AG04450 (cell line): ENCODE measurements at regions of chr9 and their contacts with region 1.

Region 1: GRCh38 chr9:91071185-91071990 is 269.8 kb downstream of the SYK start:
- DNase-seq: peak; percentile 92
- H3K4me3 ChIP-seq: no peak overlapping the region
- H3K27ac ChIP-seq: peak overlapping the region; percentile 90
- H3K27me3 ChIP-seq: no peaks in the 10 kb centered on the region
- CTCF ChIP-seq: no peak

Region 2: GRCh38 chr9:91092214-91092613 is 20.8 kb after region 1 on chr9:
- CTCF ChIA-PET with region 1: no interaction called
- POLR2A ChIA-PET with region 1: no interaction called
- DNase-seq: no peak
- H3K4me3 ChIP-seq: no peak overlapping the region
- H3K27ac ChIP-seq: no peak overlapping the region
- H3K27me3 ChIP-seq: no peaks in the 10 kb centered on the region
- CTCF ChIP-seq: no peak

Region 3: DNA sequence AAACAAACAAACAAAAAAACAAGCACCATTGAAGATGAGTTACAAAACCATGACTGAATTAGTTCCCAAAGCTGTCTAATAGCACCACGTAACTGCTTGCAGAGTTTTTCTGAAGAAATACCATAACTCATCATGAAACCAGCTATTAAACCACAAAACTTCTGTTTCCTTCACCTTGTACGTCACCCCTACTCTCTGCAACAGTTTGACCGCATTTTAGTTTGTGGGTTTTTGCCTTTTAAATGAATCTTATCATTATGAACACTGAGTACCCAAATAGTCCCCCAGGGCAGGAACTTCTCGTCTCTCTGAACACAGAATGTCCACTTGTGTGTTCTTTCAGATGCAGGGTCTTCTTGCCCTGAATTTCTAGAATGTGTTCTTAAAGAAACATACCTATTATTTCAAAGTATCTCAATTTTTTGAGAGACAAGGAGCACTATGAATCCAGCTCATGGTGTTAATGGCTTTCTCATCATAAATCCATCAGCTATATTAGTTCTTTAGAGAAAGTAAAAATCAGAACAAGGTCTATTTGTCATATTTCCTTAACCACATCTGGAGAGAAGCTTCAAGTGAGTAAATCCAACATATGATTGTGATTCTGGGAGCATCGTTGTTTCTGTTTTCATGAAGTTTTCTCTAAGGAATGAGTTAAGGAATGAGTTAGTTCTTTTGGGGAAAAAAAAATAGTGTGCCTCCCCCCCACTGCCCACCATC is 79.8 kb after region 1 on chr9:
- CTCF ChIA-PET with region 1: no interaction called
- POLR2A ChIA-PET with region 1: interaction called, 10 read pairs
- DNase-seq: no peak
- H3K4me3 ChIP-seq: no peak overlapping the region
- H3K27ac ChIP-seq: no peak overlapping the region
- H3K27me3 ChIP-seq: no peaks in the 10 kb centered on the region
- CTCF ChIP-seq: no peak